Gastrocnemius medialis (tissue), 4 donors: ENCODE measurements at regions of chr6 and their contacts with region 1.

Region 1: GRCh38 chr6:122025104-122025503 is 374.3 kb upstream of the HSF2 start:
- DNase-seq: no peak
- ATAC-seq: no peak
- H3K4me3 ChIP-seq: no peak overlapping the region
- H3K27ac ChIP-seq: no peak overlapping the region
- H3K4me1 ChIP-seq: no peaks in the 10 kb centered on the region
- H3K27me3 ChIP-seq: no peaks in the 10 kb centered on the region
- CTCF ChIP-seq: no peak
- POLR2A ChIP-seq: no peak

Region 2: DNA sequence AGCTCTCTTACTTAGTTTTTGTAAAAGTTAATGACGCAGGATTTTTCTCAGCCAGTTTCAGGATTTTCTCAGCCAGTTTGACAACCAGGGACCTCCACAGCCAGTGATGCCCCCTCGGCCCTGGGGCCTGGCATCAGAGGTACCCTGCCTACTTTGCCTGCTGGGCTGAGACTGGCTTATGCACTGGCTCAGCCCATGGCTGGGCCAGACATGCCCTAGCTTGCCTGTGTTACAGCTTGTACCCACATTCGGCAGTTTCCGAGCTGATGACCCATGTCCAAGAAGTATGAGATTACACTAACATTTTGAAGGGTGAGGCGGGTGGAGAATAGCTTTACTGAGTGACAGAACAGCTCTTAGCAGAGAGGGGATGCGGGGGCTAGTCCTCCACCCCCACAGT is 31.7 kb before region 1 on chr6:
- in situ Hi-C with region 1: no loop called
- intact Hi-C with region 1: loop called (anchors 1 kb)
- DNase-seq: no peak
- ATAC-seq: no peak
- H3K4me3 ChIP-seq: no peak overlapping the region
- H3K27ac ChIP-seq: no peak overlapping the region
- H3K4me1 ChIP-seq: no peaks in the 10 kb centered on the region
- H3K27me3 ChIP-seq: no peaks in the 10 kb centered on the region
- CTCF ChIP-seq: no peak
- POLR2A ChIP-seq: no peak